Right ventricle myocardium superior (tissue), 1 donor: ENCODE measurements at regions of chr13 and their contacts with region 1.

Region 1: GRCh38 chr13:59391696-59392095 is 772.0 kb downstream of the DIAPH3 start:
- DNase-seq: no peak
- ATAC-seq: peak; percentile 85

Region 2: DNA sequence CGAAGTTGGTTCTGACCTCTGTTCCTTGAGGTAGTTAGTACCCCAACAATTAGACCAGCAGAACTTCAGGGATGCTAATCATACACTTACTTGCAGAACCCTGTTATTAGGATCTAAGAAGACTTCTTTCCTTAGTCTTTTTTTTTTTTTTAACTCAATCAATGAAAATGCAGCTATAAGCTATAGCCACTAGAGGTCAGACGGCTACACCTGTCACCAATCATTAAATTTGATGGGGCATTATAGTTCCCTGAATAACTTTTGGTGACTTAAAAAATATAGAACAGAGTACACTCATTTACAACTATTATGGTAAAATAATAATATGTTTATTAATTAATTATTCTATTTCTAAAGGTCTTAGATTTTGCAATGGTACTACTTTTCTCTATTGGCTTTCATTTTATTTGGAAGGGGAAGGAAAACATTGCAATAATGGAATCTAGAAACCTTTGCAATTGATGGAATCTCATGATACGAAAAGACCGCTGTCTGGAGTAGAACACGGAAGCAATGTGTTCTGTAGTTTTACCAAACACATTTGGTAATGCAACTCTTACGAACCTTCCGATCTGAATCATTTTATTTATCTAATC is 288.8 kb after region 1 on chr13:
- intact Hi-C with region 1: loop called (anchors 5 kb)
- DNase-seq: no peak
- ATAC-seq: no peak

Region 3: DNA sequence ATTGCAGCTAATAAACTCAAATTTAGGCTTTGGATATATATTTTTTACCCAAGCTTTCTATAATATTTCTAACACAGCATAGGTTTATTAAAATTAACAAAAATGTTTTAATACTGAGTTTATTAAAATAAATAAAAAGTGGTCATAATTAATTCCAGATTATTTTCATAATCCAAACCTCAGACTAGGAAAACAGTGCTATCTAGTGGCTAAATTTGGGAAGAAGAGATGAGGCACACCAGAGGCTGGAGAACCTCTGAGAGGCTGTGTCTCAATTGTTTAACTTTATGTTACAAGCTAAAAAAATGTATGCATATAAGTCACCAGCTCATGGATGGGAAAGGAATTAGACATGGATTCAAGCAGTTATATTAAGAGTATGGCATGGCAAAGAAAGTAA is 379.6 kb after region 1 on chr13:
- intact Hi-C with region 1: loop called (anchors 10 kb)
- DNase-seq: no peak
- ATAC-seq: no peak